ENCODE measurements at regions of chr17 and their contacts with region 1.

Region 1: GRCh38 chr17:27601069-27601975 is 29.7 kb upstream of the LGALS9 start:
- DNase-seq: peak in 1 of 2 experiments; percentile 65
- H3K4me3 ChIP-seq: no peak overlapping the region
- H3K27ac ChIP-seq: no peak overlapping the region
- H3K4me1 ChIP-seq: peaks cover 11% of the 10 kb centered on the region
- H3K27me3 ChIP-seq: no peaks in the 10 kb centered on the region
- CTCF ChIP-seq: peak; percentile 96

Region 2: DNA sequence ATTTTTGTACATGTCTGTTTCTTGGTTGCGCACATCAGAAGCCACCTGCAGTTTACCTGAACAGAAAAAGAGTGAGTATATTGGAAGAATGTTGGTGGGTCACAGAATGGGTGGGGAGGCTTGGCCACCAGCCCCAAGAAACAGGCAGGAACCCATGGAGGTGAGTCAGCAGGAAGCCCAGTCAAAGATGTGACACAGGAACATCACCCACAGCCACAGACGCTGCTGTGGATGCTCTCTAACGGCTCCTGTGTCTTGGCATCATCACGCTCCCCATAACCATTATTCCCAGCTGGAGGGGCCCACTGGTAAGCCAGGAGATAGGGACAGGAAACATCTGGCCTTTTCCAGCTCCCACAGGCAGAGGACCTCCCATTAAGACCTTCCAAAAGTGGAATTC is 401.4 kb before region 1 on chr17:
- CTCF ChIA-PET with region 1: no interaction called
- POLR2A ChIA-PET with region 1: no interaction called
- intact Hi-C with region 1: loop called (anchors 1 kb)
- DNase-seq: no peak
- H3K4me3 ChIP-seq: no peak overlapping the region
- H3K27ac ChIP-seq: no peak overlapping the region
- H3K4me1 ChIP-seq: peaks cover 11% of the 10 kb centered on the region; the same call in 1 of the 2 replicates
- H3K27me3 ChIP-seq: no peaks in the 10 kb centered on the region
- CTCF ChIP-seq: no peak

Region 3: GRCh38 chr17:27245230-27245696 is 356.1 kb before region 1 on chr17:
- CTCF ChIA-PET with region 1: interaction called, 3 read pairs
- POLR2A ChIA-PET with region 1: no interaction called
- intact Hi-C with region 1: loop called (anchors 2 kb)
- DNase-seq: peak; percentile 62 to 67
- H3K4me3 ChIP-seq: peak overlapping the region; percentile 36; the same call in 1 of the 2 replicates
- H3K27ac ChIP-seq: peak overlapping the region; percentile 79
- H3K4me1 ChIP-seq: peaks cover 82% of the 10 kb centered on the region
- H3K27me3 ChIP-seq: no peaks in the 10 kb centered on the region
- CTCF ChIP-seq: peak; percentile 65

Region 4: GRCh38 chr17:27332485-27333409 is 268.6 kb before region 1 on chr17:
- CTCF ChIA-PET with region 1: interaction called, 12 read pairs
- POLR2A ChIA-PET with region 1: no interaction called
- intact Hi-C with region 1: loop called (anchors 5 kb)
- DNase-seq: peak; percentile 96 to 98
- H3K4me3 ChIP-seq: peak overlapping the region; percentile 62
- H3K27ac ChIP-seq: peak overlapping the region; percentile 76
- H3K4me1 ChIP-seq: peaks cover 24% of the 10 kb centered on the region
- H3K27me3 ChIP-seq: no peaks in the 10 kb centered on the region
- CTCF ChIP-seq: peak; percentile 81

Region 5: DNA sequence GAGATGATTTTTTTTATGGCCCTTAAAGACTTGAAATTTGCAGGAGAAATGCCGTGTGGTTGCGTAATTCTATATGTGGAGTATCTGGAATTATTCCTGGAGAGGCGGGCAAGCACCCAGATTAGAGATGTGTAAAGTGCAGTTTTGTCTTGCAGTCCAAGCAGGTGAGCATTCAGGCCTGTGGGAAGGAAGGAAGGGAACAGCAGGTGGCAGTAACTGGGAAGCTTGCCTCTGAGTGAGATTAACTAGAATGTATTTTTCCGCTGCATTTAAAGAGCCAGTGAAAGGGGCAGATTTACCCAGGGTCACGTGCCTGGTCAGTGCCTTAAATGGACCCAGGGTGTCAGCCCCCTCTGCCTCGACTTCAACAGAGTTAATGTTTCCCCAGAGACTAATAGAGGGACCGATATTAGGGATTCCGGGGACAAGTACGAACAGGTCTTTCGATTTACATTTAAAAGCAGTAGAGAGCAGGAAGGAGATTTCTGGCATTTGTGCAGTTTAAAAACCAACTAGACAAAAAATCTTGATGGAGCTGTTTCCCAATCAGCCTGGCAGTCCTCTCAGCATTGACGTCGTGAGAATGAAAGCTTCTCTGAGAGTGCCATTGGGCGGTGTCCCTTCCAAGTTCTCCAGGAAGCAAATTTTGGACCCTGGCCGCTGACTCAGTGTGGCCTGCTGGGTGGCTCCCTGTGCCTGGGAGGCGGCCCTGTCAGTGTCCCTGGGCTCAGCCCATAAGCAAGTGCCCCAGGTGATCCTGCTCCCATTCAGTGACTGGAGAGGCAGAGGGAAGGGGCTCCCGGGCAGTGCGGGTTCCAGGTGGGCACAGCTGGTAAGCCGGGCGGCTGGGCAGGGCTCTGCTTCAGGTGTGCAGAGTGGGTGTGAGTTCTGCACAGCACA is 106.9 kb before region 1 on chr17:
- CTCF ChIA-PET with region 1: interaction called, 6 read pairs
- POLR2A ChIA-PET with region 1: no interaction called
- intact Hi-C with region 1: loop called (anchors 1 kb)
- DNase-seq: peak; percentile 76 to 84
- H3K4me3 ChIP-seq: peak overlapping the region; percentile 54; the same call in 1 of the 2 replicates
- H3K27ac ChIP-seq: peak overlapping the region; percentile 82
- H3K4me1 ChIP-seq: peaks cover 24% of the 10 kb centered on the region
- H3K27me3 ChIP-seq: no peaks in the 10 kb centered on the region
- CTCF ChIP-seq: peak; percentile 64

Region 6: GRCh38 chr17:27760069-27760885 is 159.0 kb after region 1 on chr17:
- CTCF ChIA-PET with region 1: no interaction called
- POLR2A ChIA-PET with region 1: no interaction called
- intact Hi-C with region 1: loop called (anchors 1 kb)
- DNase-seq: peak in 1 of 2 experiments; percentile 63
- H3K4me3 ChIP-seq: no peak overlapping the region
- H3K27ac ChIP-seq: no peak overlapping the region
- H3K4me1 ChIP-seq: no peaks in the 10 kb centered on the region
- H3K27me3 ChIP-seq: peaks cover 35% of the 10 kb centered on the region
- CTCF ChIP-seq: peak; percentile 95